Ascending aorta (tissue), 2 donors: ENCODE measurements at regions of chr2 and their contacts with region 1.

Region 1: GRCh38 chr2:161160226-161161069 is at the start of gene TANK:
- DNase-seq: peak; percentile 67 to 96
- H3K4me3 ChIP-seq: peak within 1 kb of the TSS; percentile 95 to 97
- H3K27ac ChIP-seq: peak within 1 kb of the TSS; percentile 94 to 98
- H3K4me1 ChIP-seq: peaks cover 0 to 29% of the 10 kb centered on the region in 2 donors
- H3K27me3 ChIP-seq: no peaks in the 10 kb centered on the region
- CTCF ChIP-seq: no peak
- total RNA-seq, gene TANK: 18.4 TPM

Region 2: DNA sequence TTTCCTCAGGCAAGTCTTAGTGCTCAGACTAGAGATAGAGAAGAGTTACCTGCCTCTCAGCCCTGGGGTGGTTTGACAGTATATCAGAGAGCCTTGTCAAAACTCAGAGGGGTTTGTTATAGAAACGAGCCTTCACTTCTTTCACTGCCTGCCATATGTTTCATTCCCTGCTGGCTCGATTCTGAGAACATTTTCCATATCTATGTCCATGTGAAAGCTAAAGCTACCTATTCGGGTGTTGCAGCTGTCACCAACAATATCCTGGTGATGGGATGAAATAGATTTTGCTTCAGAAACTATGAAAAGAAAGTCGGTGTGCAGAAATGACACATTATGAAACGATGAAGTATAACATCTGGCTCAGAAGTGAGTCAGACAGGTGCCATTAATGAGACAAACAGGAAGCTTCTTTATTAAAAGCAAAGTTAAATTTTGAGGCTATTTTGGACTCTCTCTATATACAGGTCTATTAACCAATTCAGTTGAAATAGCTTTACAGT is 56.3 kb before region 1 on chr2:
- intact Hi-C with region 1: loop called (anchors 5 kb)
- DNase-seq: no peak
- H3K4me3 ChIP-seq: no peak overlapping the region
- H3K27ac ChIP-seq: no peak overlapping the region
- H3K4me1 ChIP-seq: peaks cover 0 to 6% of the 10 kb centered on the region in 2 donors
- H3K27me3 ChIP-seq: no peaks in the 10 kb centered on the region
- CTCF ChIP-seq: no peak

Region 3: GRCh38 chr2:161122772-161123530 is 37.5 kb before region 1 on chr2:
- intact Hi-C with region 1: loop called (anchors 1 kb)
- DNase-seq: peak in 1 of 2 donors; percentile 68
- H3K4me3 ChIP-seq: peak overlapping the region in 1 of 2 donors; percentile 24
- H3K27ac ChIP-seq: peak overlapping the region; percentile 83 to 88
- H3K4me1 ChIP-seq: peaks cover 0 to 13% of the 10 kb centered on the region in 2 donors
- H3K27me3 ChIP-seq: no peaks in the 10 kb centered on the region
- CTCF ChIP-seq: no peak